ENCODE measurements at regions of chr3 and their contacts with region 1.

Region 1: DNA sequence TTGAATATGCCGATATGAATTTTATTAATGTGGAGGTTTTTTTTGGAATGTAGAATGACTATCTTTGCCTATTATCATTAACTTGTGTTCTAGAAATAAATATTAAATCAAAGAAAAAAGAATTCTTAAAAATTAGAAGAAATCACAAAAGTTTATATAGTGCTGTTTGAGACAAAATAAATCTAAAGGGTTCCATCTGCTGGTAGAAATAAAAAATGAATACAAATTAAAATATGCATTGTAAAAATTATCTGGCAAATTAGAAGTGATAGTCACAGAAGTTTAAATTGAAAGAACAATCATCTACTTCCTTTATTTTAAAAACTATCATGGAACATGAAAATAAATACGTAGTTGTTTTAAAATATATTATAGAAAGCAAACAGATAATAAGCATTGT is 22.7 kb upstream of the ZBTB20 start:
- DNase-seq: no peak
- ATAC-seq: no peak
- H3K4me3 ChIP-seq: no peak overlapping the region
- H3K27ac ChIP-seq: no peak overlapping the region
- H3K4me1 ChIP-seq: no peaks in the 10 kb centered on the region
- H3K27me3 ChIP-seq: no peaks in the 10 kb centered on the region
- CTCF ChIP-seq: peak in 4 of 5 experiments; percentile 15 to 57 (median 42)
- POLR2A ChIP-seq: no peak

Region 2: GRCh38 chr3:114827495-114827894 is 342.3 kb before region 1 on chr3:
- in situ Hi-C with region 1: loop called in 2 of 4 experiments (anchors 10 to 25 kb)
- intact Hi-C with region 1: loop called (anchors 2 kb)
- DNase-seq: no peak
- ATAC-seq: peak; percentile 44 to 68
- H3K4me3 ChIP-seq: no peak overlapping the region
- H3K27ac ChIP-seq: no peak overlapping the region
- H3K4me1 ChIP-seq: peaks cover 2 to 47% of the 10 kb centered on the region in 2 donors
- H3K27me3 ChIP-seq: no peaks in the 10 kb centered on the region
- CTCF ChIP-seq: peak; percentile 41 to 66 (median 57)
- POLR2A ChIP-seq: no peak

Region 3: GRCh38 chr3:115187149-115187757 is 17.4 kb after region 1 on chr3:
- in situ Hi-C with region 1: no loop called
- intact Hi-C with region 1: no loop called
- DNase-seq: no peak
- ATAC-seq: no peak
- H3K4me3 ChIP-seq: no peak overlapping the region
- H3K27ac ChIP-seq: no peak overlapping the region
- H3K4me1 ChIP-seq: no peaks in the 10 kb centered on the region
- H3K27me3 ChIP-seq: no peaks in the 10 kb centered on the region
- CTCF ChIP-seq: no peak
- POLR2A ChIP-seq: no peak

Measured in gastrocnemius medialis (tissue), 4 donors.